Activated naive CD4-positive, alpha-beta T cell treated with anti-CD3 and anti-CD28 coated beads for 36 hours (primary cell): ENCODE measurements at regions of chr9 and their contacts with region 1.

Region 1: GRCh38 chr9:108565651-108566378 is 290.0 kb downstream of the ACTL7B start:
- DNase-seq: peak; percentile 21
- H3K4me3 Mint-ChIP-seq: no peak overlapping the region
- H3K27ac Mint-ChIP-seq: no peak overlapping the region
- H3K4me1 Mint-ChIP-seq: no peaks in the 10 kb centered on the region
- H3K27me3 Mint-ChIP-seq: peaks cover 2% of the 10 kb centered on the region

Region 2: DNA sequence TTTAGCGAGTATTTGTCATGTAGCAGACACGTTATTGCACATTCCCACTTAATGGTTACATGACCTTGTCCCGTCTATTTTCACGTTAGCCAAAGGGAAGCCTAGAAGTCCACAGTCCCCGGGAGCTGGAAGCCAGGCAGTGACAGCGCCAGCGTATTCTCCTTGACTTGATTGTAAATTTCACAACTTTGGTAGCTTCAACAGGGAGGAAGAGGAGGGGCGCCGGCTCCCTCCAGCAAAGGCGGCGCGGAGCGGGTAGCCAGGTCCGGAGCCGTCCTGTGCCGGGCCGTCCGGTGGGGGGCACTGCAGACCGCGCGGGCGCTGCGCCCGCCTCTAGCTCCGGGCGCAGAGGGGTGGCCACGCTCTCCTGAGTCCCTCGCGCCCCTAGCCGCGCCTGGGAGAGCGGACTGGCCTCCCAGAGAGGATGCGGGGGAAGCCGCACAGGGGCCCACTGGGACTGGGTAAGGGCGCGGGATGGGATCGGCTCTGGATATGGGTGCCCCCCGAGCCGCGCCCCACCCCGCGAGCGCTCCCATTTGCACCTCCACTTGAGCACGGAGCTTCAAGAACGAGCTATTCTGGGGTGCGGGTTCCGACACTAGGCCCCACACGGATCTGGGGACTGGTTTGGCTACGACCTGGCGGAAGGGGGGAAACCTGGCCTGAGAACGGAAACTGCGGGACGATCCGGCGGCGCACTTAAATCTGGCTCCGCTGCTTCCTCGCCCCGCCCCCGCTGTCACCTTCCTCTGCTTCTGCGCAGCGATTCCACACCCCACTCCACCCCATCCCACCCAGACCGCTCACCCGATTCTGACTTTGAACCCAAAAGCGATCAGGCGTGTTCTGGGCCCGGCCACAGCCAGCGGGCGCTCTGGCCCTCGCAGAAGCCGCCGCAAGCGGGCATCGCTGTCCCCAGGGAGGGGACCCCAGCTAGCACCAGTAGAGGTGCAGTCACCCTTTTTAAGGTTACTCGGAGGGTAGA is 1100.1 kb before region 1 on chr9:
- CTCF ChIA-PET with region 1: no interaction called
- intact Hi-C with region 1: loop called (anchors 5 kb)
- DNase-seq: peak; percentile 41
- H3K4me3 Mint-ChIP-seq: peak overlapping the region; percentile 16
- H3K27ac Mint-ChIP-seq: no peak overlapping the region
- H3K4me1 Mint-ChIP-seq: peaks cover 7% of the 10 kb centered on the region
- H3K27me3 Mint-ChIP-seq: peaks cover 36% of the 10 kb centered on the region

Region 3: GRCh38 chr9:107484117-107484723 is 1081.6 kb before region 1 on chr9:
- CTCF ChIA-PET with region 1: no interaction called
- intact Hi-C with region 1: loop called (anchors 2 kb)
- DNase-seq: peak; percentile 23
- H3K4me3 Mint-ChIP-seq: no peak overlapping the region
- H3K27ac Mint-ChIP-seq: no peak overlapping the region
- H3K4me1 Mint-ChIP-seq: no peaks in the 10 kb centered on the region
- H3K27me3 Mint-ChIP-seq: peaks cover 33% of the 10 kb centered on the region

Region 4: DNA sequence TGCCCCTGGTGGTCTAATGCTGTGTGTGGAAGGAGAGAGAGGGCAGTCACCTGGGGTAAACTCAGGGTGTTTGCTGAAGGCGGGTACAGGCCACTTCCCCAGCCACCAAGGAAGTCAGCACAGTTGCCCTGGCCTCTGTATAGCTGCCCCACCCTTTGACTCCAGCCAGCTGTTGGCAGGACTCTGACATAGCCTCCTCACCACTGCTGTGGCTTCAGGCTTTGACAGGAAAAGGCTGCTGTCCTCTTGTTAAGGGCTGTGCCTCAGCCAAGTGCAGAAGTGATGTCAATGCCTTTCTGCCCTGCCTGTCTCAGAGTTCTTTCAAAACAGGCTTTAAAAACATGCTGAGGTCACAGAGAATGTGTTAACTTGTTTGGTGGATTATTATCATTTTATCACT is 589.0 kb before region 1 on chr9:
- CTCF ChIA-PET with region 1: no interaction called
- intact Hi-C with region 1: no loop called
- DNase-seq: no peak
- H3K4me3 Mint-ChIP-seq: no peak overlapping the region
- H3K27ac Mint-ChIP-seq: no peak overlapping the region
- H3K4me1 Mint-ChIP-seq: no peaks in the 10 kb centered on the region
- H3K27me3 Mint-ChIP-seq: no peaks in the 10 kb centered on the region

Region 5: DNA sequence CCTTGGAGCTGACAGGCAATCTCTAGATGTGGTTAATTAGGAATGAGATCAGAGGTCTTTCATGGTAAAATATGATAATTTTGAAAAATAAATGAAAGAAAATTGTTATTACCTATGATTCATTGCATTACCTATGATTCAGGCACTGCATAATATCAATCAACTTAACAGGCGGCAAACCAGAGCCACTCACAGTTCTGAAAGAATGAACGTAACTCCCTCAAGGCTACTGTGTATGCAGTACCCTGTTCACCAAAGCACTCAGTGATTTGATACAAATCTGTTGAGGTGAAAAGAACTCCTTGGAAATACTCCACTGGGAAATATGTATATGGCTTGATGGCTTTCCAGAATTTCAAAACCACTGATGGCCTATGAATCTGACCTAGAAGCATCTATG is 108.9 kb before region 1 on chr9:
- CTCF ChIA-PET with region 1: no interaction called
- intact Hi-C with region 1: no loop called
- DNase-seq: no peak
- H3K4me3 Mint-ChIP-seq: no peak overlapping the region
- H3K27ac Mint-ChIP-seq: no peak overlapping the region
- H3K4me1 Mint-ChIP-seq: no peaks in the 10 kb centered on the region
- H3K27me3 Mint-ChIP-seq: no peaks in the 10 kb centered on the region

Region 6: DNA sequence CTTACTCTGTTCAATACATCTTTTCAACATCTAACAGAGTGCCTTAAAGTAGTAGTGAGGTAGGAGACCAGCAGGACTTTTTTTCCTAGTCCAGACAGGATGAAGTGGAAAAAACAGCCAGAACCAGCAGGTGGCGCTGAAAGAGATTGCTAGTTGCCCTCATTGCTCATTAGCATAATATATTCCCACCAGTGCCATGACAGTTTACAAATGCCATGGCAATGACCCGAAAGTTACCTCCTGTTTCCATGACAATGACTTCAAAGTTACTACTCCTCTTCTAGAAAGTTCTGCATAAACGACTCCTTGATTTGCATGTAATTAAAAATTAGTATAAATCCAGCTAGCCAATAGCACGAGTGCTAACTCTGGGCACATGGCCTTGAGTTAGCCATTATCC is 97.4 kb before region 1 on chr9:
- CTCF ChIA-PET with region 1: interaction called, 3 read pairs
- intact Hi-C with region 1: loop called (anchors 5 kb)
- DNase-seq: peak; percentile 53
- H3K4me3 Mint-ChIP-seq: no peak overlapping the region
- H3K27ac Mint-ChIP-seq: no peak overlapping the region
- H3K4me1 Mint-ChIP-seq: no peaks in the 10 kb centered on the region
- H3K27me3 Mint-ChIP-seq: no peaks in the 10 kb centered on the region

Region 7: GRCh38 chr9:108761655-108762347 is 196.0 kb after region 1 on chr9:
- CTCF ChIA-PET with region 1: no interaction called
- intact Hi-C with region 1: loop called (anchors 10 kb)
- DNase-seq: peak; percentile 58
- H3K4me3 Mint-ChIP-seq: no peak overlapping the region
- H3K27ac Mint-ChIP-seq: no peak overlapping the region
- H3K4me1 Mint-ChIP-seq: peaks cover 2% of the 10 kb centered on the region
- H3K27me3 Mint-ChIP-seq: peaks cover 5% of the 10 kb centered on the region

Region 8: DNA sequence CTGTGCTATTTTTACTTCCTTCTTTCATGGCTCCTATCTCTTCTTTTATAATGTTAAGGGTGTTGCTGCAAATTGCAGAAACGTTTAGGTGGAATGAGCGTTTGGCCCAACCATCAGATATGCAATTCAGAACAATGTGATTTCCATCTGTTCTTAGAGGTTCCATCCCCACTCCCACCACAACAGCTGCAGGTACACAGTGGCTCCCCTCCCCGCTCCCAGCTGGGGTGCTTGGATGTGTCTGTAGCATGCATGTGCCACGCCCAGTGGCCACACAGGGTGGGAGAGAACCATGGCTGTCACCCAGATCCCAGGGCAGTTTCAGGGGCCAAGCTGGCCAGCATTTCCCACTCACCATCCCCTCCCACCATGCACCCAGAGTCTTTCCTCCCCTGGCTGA is 227.8 kb after region 1 on chr9:
- CTCF ChIA-PET with region 1: no interaction called
- intact Hi-C with region 1: no loop called
- DNase-seq: no peak
- H3K4me3 Mint-ChIP-seq: no peak overlapping the region
- H3K27ac Mint-ChIP-seq: no peak overlapping the region
- H3K4me1 Mint-ChIP-seq: no peaks in the 10 kb centered on the region
- H3K27me3 Mint-ChIP-seq: peaks cover 2% of the 10 kb centered on the region

Region 9: GRCh38 chr9:108953983-108954574 is 388.3 kb after region 1 on chr9:
- CTCF ChIA-PET with region 1: no interaction called
- intact Hi-C with region 1: loop called (anchors 10 kb)
- DNase-seq: no peak
- H3K4me3 Mint-ChIP-seq: no peak overlapping the region
- H3K27ac Mint-ChIP-seq: no peak overlapping the region
- H3K4me1 Mint-ChIP-seq: peaks cover 2% of the 10 kb centered on the region
- H3K27me3 Mint-ChIP-seq: peaks cover 2% of the 10 kb centered on the region